WTC11 (cell line): ENCODE measurements at regions of chr4 and their contacts with region 1.

Region 1: GRCh38 chr4:99054428-99054994 is 34.1 kb downstream of the ADH5 start:
- DNase-seq: no peak
- ATAC-seq: no peak
- H3K4me3 Mint-ChIP-seq: no peak overlapping the region
- H3K27ac Mint-ChIP-seq: peak overlapping the region; percentile 19; the same call in 1 of the 2 replicates
- H3K4me1 Mint-ChIP-seq: peaks cover 14% of the 10 kb centered on the region
- H3K27me3 Mint-ChIP-seq: no peaks in the 10 kb centered on the region
- CTCF ChIP-seq: no peak

Region 2: GRCh38 chr4:99024481-99025275 is 29.8 kb before region 1 on chr4:
- CTCF ChIA-PET with region 1: interaction called, 13 read pairs
- POLR2A ChIA-PET with region 1: no interaction called
- DNase-seq: no peak
- ATAC-seq: 0 out of 2 replicates have a peak, but pooled peaks have one; percentile 16
- H3K4me3 Mint-ChIP-seq: peak overlapping the region; percentile 8; the same call in 1 of the 2 replicates
- H3K27ac Mint-ChIP-seq: peak overlapping the region; percentile 72
- H3K4me1 Mint-ChIP-seq: peaks cover 67% of the 10 kb centered on the region
- H3K27me3 Mint-ChIP-seq: no peaks in the 10 kb centered on the region
- CTCF ChIP-seq: no peak

Region 3: GRCh38 chr4:99067617-99068016 is 13.1 kb after region 1 on chr4:
- CTCF ChIA-PET with region 1: interaction called, 13 read pairs
- POLR2A ChIA-PET with region 1: no interaction called
- DNase-seq: no peak
- ATAC-seq: no peak
- H3K4me3 Mint-ChIP-seq: no peak overlapping the region
- H3K27ac Mint-ChIP-seq: no peak overlapping the region
- H3K4me1 Mint-ChIP-seq: no peaks in the 10 kb centered on the region
- H3K27me3 Mint-ChIP-seq: no peaks in the 10 kb centered on the region
- CTCF ChIP-seq: no peak

Region 4: DNA sequence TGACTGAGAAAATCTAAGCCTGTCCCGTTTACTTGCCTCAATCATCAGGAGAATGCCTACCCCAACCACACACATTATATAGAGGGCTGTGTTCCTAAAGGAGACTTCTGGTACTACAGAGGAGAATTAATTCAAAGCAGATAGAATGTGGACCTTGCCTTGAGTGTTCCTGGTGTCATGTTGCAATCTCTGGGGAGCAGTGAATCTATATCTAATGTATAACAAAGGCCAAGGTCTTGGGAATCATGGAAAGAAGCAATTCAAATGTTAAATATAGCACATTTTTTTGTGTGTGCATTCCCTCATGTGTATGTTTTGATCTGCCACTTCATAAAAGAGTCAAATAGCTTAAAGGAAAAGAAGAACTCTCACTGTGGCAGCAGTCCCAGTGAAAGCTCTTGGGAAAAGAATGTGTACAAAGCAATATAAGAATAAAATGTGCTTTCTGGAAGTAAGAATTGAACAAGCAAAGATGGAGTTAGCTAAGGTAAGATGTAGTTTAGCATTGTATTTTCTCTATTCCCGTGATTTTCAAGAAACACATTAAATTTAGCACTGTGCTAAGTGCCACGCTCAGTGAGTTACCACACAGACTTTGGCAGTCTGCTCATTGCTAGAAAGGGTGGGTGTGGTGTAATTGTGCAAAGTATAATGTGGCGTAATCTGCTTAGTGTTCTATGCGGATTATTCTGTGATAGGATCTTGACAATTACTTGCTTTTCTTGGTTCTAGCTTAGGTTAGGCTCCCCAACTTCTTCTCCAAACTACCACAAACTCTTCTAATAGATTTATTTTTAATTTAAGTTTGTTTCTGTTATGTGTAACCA is 150.9 kb after region 1 on chr4:
- CTCF ChIA-PET with region 1: no interaction called
- POLR2A ChIA-PET with region 1: no interaction called
- DNase-seq: no peak
- ATAC-seq: peak; percentile 93
- H3K4me3 Mint-ChIP-seq: no peak overlapping the region
- H3K27ac Mint-ChIP-seq: no peak overlapping the region
- H3K4me1 Mint-ChIP-seq: peaks cover 35% of the 10 kb centered on the region
- H3K27me3 Mint-ChIP-seq: no peaks in the 10 kb centered on the region
- CTCF ChIP-seq: no peak

Region 5: GRCh38 chr4:99293357-99293756 is 238.8 kb after region 1 on chr4:
- CTCF ChIA-PET with region 1: no interaction called
- POLR2A ChIA-PET with region 1: no interaction called
- DNase-seq: no peak
- ATAC-seq: no peak
- H3K4me3 Mint-ChIP-seq: no peak overlapping the region
- H3K27ac Mint-ChIP-seq: no peak overlapping the region
- H3K4me1 Mint-ChIP-seq: no peaks in the 10 kb centered on the region
- H3K27me3 Mint-ChIP-seq: peaks cover 3% of the 10 kb centered on the region; the same call in 1 of the 2 replicates
- CTCF ChIP-seq: no peak